K562 (cell line): ENCODE measurements at regions of chr1 and their contacts with region 1.

Region 1: DNA sequence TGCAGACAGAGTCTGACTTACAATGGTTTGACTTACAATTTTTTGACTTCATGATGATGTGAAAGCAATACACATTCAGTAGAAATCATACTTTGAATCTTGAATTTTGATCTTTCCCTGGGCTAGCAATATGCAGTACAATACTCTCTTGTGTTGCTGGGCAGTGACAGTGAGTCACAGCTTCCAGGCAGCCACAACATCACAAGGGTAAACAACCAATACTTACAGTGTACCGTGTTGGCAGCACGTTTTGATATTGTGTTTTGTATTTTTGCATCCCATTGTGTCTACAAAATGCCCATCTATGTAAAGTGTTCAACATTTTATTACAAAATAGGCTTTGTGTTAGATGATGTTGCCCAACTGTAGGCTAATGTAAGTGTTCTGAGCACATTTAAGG is 150.9 kb downstream of the NTMT2 start:
- DNase-seq: no peak
- ATAC-seq: no peak
- H3K4me3 ChIP-seq: no peak overlapping the region
- H3K27ac ChIP-seq: no peak overlapping the region
- H3K4me1 ChIP-seq: no peaks in the 10 kb centered on the region
- H3K27me3 ChIP-seq: no peaks in the 10 kb centered on the region
- CTCF ChIP-seq: no peak
- EP300 ChIP-seq: no peak
- POLR2A ChIP-seq: no peak
- RAD21 ChIP-seq: no peak

Region 2: GRCh38 chr1:170182442-170182841 is 114.2 kb before region 1 on chr1:
- CTCF ChIA-PET with region 1: no interaction called
- POLR2A ChIA-PET with region 1: no interaction called
- in situ Hi-C with region 1: no loop called
- intact Hi-C with region 1: loop called (anchors 5 kb)
- DNase-seq: no peak
- ATAC-seq: no peak
- H3K4me3 ChIP-seq: no peak overlapping the region
- H3K27ac ChIP-seq: no peak overlapping the region
- H3K4me1 ChIP-seq: no peaks in the 10 kb centered on the region
- H3K27me3 ChIP-seq: no peaks in the 10 kb centered on the region
- CTCF ChIP-seq: no peak
- EP300 ChIP-seq: no peak
- POLR2A ChIP-seq: no peak
- RAD21 ChIP-seq: no peak